GM12878 (cell line): ENCODE measurements at regions of chrX and their contacts with region 1.

Region 1: DNA sequence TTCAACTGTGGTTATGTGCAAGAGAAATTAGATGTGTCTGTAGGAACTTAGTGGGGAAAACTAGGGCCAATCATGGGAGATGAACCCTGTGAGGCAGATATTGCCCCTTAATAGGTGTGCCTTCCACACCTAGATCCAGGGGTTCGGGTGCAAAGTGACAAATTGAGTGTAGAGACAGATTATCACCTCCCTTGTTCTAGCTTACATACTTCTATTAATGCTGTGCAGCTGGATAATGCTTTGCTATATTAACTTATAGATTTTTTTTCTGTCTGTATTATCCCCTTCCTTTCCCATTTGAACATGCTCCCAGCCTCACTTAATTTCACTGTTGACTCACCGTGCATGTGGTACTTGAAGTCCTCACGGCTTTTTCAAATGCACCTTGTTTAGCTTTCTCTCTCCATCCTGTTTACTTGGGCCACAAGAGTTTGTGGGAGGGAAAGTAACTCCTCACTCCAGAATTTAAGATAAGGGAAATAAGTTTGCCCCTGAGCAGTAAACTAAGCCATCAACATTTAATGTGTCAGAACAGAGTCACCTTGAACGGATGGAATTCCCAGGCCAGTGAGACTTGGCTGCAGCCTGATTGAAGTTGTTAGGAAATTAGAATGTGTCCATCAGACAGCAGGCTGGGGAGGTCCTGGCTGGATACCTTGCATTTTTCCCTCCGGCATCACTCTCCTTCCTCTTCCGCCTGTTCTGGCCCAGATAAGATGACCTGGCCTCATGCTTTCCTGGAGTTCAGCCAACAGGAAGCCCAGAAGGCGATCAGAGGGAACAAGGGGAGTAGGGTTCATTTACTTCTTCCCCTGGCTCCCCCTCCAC is 478.4 kb downstream of the BCOR start:
- DNase-seq: no peak
- ATAC-seq: no peak
- H3K4me3 ChIP-seq: no peak overlapping the region
- H3K27ac ChIP-seq: no peak overlapping the region
- H3K4me1 ChIP-seq: peaks cover 6% of the 10 kb centered on the region
- H3K27me3 ChIP-seq: no peaks in the 10 kb centered on the region
- CTCF ChIP-seq: no peak
- EP300 ChIP-seq: no peak
- POLR2A ChIP-seq: no peak
- RAD21 ChIP-seq: no peak

Region 2: GRCh38 chrX:39592776-39593175 is 26.6 kb before region 1 on chrX:
- CTCF ChIA-PET with region 1: no interaction called
- POLR2A ChIA-PET with region 1: no interaction called
- RAD21 ChIA-PET with region 1: no interaction called
- SMC1A ChIA-PET with region 1: no interaction called
- in situ Hi-C with region 1: no loop called
- intact Hi-C with region 1: no loop called
- DNase-seq: no peak
- ATAC-seq: no peak
- H3K4me3 ChIP-seq: no peak overlapping the region
- H3K27ac ChIP-seq: no peak overlapping the region
- H3K4me1 ChIP-seq: no peaks in the 10 kb centered on the region
- H3K27me3 ChIP-seq: no peaks in the 10 kb centered on the region; a peak in 2 of 4 replicates
- CTCF ChIP-seq: no peak
- EP300 ChIP-seq: no peak
- POLR2A ChIP-seq: no peak
- RAD21 ChIP-seq: no peak

Region 3: GRCh38 chrX:40207626-40208025 is 588.2 kb after region 1 on chrX:
- CTCF ChIA-PET with region 1: no interaction called
- POLR2A ChIA-PET with region 1: no interaction called
- RAD21 ChIA-PET with region 1: no interaction called
- SMC1A ChIA-PET with region 1: no interaction called
- in situ Hi-C with region 1: no loop called
- intact Hi-C with region 1: loop called (anchors 5 kb)
- DNase-seq: no peak
- ATAC-seq: peak; percentile 70
- H3K4me3 ChIP-seq: no peak overlapping the region
- H3K27ac ChIP-seq: no peak overlapping the region
- H3K4me1 ChIP-seq: peaks cover 8% of the 10 kb centered on the region; the same call in 1 of the 2 replicates
- H3K27me3 ChIP-seq: no peaks in the 10 kb centered on the region
- CTCF ChIP-seq: no peak
- EP300 ChIP-seq: no peak
- POLR2A ChIP-seq: no peak
- RAD21 ChIP-seq: no peak